ENCODE measurements at regions of chr18 and their contacts with region 1.

Region 1: DNA sequence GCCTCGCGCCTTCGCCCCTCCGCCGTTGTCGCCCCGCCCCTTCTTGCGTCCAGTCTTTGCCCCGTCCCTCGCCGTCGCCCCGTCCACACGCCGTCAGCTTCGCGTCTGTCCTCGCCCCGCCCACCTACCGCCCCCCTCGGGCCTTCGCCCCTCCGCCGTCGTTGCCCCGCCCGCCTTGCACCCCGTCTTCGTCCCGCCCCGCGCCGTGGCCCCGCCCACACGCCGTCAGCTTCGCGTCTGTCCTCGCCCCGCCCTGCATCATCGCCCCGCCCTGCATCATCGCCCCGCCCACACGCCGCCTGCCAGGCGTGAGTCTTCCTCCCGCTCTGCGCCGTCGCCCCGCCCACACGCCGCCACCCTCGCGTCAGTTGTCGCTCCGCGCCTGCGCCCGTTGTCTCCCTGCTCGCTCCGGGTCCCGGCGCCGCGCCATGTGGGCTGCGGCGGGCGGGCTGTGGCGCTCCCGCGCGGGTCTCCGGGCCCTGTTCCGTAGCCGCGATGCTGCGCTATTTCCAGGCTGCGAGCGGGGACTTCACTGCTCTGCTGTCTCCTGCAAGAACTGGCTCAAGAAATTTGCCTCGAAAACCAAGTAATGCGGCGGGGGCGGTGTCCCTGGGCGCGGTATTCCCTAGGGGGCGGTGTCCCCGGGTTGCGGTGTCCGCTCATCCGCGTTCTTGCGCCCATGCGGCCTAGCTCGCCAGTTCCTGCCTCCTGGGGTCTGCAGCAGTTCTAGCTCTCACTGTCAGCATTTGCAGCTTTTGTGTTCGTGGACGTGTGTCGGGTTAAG is at the start of gene RBFA:
- DNase-seq: peak; percentile 96 to 100 (median 99)
- ATAC-seq: peak; percentile 74 to 83 (median 80)
- H3K4me3 ChIP-seq: peak within 1 kb of the TSS; percentile 84 to 89
- H3K4me3 Mint-ChIP-seq: peak within 1 kb of the TSS; percentile 85 to 88 (median 86)
- H3K27ac ChIP-seq: peak within 1 kb of the TSS; percentile 95
- H3K27ac Mint-ChIP-seq: peak within 1 kb of the TSS; percentile 90 to 95
- H3K4me1 ChIP-seq: peaks cover 12 to 23% of the 10 kb centered on the region in 2 experiments
- H3K4me1 Mint-ChIP-seq: peaks cover 26 to 29% (median 29%) of the 10 kb centered on the region in 3 donors
- H3K27me3 ChIP-seq: no peaks in the 10 kb centered on the region
- H3K27me3 Mint-ChIP-seq: no peaks in the 10 kb centered on the region
- total RNA-seq, gene RBFA: 17.9 to 27.4 (median 20.9) TPM

Region 2: GRCh38 chr18:79819968-79820351 is 214.3 kb before region 1 on chr18:
- CTCF ChIA-PET with region 1: no interaction called
- POLR2A ChIA-PET with region 1: no interaction called
- DNase-seq: peak in 1 of 35 experiments; percentile 29
- ATAC-seq: peak in 2 of 4 experiments; percentile 23 to 35
- H3K4me3 ChIP-seq: no peak overlapping the region
- H3K4me3 Mint-ChIP-seq: peak overlapping the region in 1 of 3 donors; percentile 44
- H3K27ac ChIP-seq: no peak overlapping the region
- H3K27ac Mint-ChIP-seq: no peak overlapping the region
- H3K4me1 ChIP-seq: no peaks in the 10 kb centered on the region
- H3K4me1 Mint-ChIP-seq: peaks cover 6 to 10% (median 8%) of the 10 kb centered on the region in 3 donors
- H3K27me3 ChIP-seq: peaks cover 0 to 18% of the 10 kb centered on the region in 2 experiments
- H3K27me3 Mint-ChIP-seq: peaks cover 6 to 7% of the 10 kb centered on the region in 2 donors

Region 3: GRCh38 chr18:79964330-79965118 is 69.7 kb before region 1 on chr18 and contains the start of gene HSBP1L1:
- CTCF ChIA-PET with region 1: no interaction called
- POLR2A ChIA-PET with region 1: interaction called in 1 of 2 experiments, 13 read pairs
- DNase-seq: peak in 34 of 35 experiments; percentile 35 to 79 (median 59)
- ATAC-seq: peak; percentile 83 to 92 (median 90)
- H3K4me3 ChIP-seq: peak within 1 kb of the TSS; percentile 62 to 66
- H3K4me3 Mint-ChIP-seq: peak within 1 kb of the TSS; percentile 83 to 84 (median 83)
- H3K27ac ChIP-seq: peak within 1 kb of the TSS; percentile 62
- H3K27ac Mint-ChIP-seq: peak within 1 kb of the TSS; percentile 90 to 91
- H3K4me1 ChIP-seq: peaks cover 13 to 50% of the 10 kb centered on the region in 2 experiments
- H3K4me1 Mint-ChIP-seq: peaks cover 34 to 44% (median 40%) of the 10 kb centered on the region in 3 donors
- H3K27me3 ChIP-seq: peaks cover 0 to 12% of the 10 kb centered on the region in 2 experiments
- H3K27me3 Mint-ChIP-seq: no peaks in the 10 kb centered on the region
- total RNA-seq, gene HSBP1L1: 17.3 to 26.6 (median 20.6) TPM

Region 4: DNA sequence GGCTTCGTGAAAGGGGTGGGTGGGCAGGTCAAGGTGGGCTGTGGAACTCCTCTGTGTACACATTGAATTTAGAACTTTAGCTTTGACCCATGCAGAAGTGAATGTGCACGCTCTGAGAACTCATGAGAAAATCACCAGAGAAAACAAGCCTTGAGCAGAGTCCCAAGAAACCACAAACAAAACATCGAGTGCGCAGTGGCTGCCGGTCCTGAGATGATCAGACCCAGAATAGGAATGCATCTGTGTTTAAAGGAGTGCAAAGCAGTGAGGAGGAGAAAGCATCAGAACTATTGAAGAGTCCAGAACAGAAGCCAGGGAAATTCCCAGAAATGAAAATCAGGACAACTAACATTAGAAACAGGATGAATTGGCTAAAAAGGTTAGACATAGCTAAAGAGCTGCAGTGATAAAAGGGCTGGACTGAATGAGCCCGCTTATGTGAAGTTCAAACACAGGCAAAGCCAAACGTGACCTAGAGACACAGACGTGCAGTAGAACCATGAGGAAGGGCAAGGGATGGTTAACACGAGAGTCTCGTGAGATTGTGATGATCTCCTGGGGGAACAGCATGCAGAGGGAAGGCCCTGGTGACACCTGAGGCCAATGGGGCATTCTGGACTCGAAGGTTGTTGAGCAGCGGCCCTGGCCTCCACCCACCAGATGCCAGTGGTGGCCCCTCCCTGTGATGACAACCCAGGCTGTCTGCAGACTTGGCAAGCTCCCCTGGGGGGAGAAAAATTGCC is 29.5 kb before region 1 on chr18:
- CTCF ChIA-PET with region 1: no interaction called
- POLR2A ChIA-PET with region 1: interaction called in 1 of 2 experiments, 14 read pairs
- DNase-seq: no peak
- ATAC-seq: no peak
- H3K4me3 ChIP-seq: no peak overlapping the region
- H3K4me3 Mint-ChIP-seq: no peak overlapping the region
- H3K27ac ChIP-seq: no peak overlapping the region
- H3K27ac Mint-ChIP-seq: no peak overlapping the region
- H3K4me1 ChIP-seq: no peaks in the 10 kb centered on the region
- H3K4me1 Mint-ChIP-seq: no peaks in the 10 kb centered on the region
- H3K27me3 ChIP-seq: peaks cover 0 to 3% of the 10 kb centered on the region in 2 experiments
- H3K27me3 Mint-ChIP-seq: no peaks in the 10 kb centered on the region

Region 5: DNA sequence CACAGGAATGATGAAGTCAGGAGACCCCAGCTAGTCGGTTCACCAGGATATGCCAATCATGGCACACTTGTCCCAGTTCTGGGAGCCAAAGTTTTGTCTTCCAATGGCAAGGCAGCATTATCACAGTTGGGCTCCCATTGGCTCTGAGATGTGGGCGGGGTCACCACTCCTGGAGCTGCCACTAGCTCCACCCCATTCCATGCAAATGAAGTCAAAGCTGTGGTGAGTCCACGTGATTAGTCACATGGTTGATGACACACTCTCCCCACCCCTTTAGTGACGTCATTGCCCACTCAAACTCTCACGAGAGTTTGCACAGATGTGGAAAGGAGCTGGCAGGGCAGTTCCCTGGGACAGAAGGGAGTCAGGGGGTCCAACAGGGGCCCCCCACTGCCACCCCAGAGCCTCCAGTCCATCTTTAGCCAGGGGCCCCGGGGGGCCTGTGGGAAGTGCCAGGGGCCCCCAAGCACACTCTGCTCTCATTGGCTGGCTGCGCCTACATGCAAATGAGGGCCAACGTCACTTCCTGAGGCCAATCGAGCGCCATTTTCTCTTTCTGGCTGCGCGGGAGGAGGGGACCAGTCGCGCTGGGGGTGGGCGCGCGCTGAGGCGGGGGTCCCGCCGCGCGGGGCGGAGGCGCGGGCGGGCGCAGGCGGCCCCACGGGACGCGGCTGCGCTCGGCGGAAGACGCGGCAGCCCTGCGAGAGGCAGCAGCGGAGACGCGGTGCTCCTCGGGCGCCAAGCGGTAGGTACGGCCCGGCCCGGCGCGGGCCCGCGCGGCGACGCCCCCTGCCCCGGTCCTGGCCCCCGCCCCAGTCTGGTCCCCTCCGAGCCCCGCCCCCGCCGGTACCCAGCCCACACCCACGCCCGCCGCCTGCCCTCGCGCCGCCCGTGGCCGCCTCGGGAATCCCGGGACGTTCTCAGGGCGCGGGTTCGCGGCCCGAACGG is 74.7 kb after region 1 on chr18 and contains the start of gene ADNP2:
- CTCF ChIA-PET with region 1: no interaction called
- POLR2A ChIA-PET with region 1: interaction called, 3 to 13 read pairs
- DNase-seq: peak; percentile 56 to 94 (median 83)
- ATAC-seq: peak; percentile 73 to 84 (median 80)
- H3K4me3 ChIP-seq: peak within 1 kb of the TSS; percentile 74 to 79
- H3K4me3 Mint-ChIP-seq: peak within 1 kb of the TSS; percentile 66 to 81 (median 80)
- H3K27ac ChIP-seq: peak within 1 kb of the TSS; percentile 88
- H3K27ac Mint-ChIP-seq: peak within 1 kb of the TSS; percentile 77 to 88
- H3K4me1 ChIP-seq: peaks cover 12 to 20% of the 10 kb centered on the region in 2 experiments
- H3K4me1 Mint-ChIP-seq: peaks cover 43 to 47% (median 47%) of the 10 kb centered on the region in 3 donors
- H3K27me3 ChIP-seq: no peaks in the 10 kb centered on the region
- H3K27me3 Mint-ChIP-seq: no peaks in the 10 kb centered on the region
- total RNA-seq, gene ADNP2: 17.0 to 36.3 (median 18.1) TPM

Region 6: DNA sequence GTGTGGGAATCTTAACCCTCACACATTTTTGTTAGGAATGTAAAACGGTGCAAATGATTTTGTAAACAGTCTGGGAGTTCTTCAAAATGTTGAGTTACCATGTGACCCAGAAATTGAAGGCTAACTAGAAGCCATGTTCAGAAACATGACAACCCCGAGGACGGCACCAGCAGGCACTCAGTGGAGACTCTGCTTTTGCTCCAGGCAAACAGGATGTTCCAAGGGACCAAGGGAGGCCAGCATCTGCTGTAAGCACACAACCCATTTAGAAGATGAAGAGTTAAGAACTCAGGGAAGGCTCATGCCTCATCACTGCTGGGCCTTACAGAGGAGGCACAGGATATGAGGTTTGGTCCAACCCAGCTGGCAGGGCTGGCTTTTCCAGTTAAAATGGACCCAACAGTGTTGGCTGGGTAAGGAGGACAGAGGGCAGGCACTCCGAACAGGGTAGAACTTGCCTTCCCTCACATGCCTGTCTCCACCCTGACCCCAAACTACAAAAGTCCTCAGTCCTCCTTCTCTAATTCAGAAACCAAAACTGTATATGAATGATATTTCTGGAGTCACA is 189.4 kb after region 1 on chr18:
- CTCF ChIA-PET with region 1: no interaction called
- POLR2A ChIA-PET with region 1: no interaction called
- DNase-seq: no peak
- ATAC-seq: no peak
- H3K4me3 ChIP-seq: no peak overlapping the region
- H3K4me3 Mint-ChIP-seq: no peak overlapping the region
- H3K27ac ChIP-seq: no peak overlapping the region
- H3K27ac Mint-ChIP-seq: no peak overlapping the region
- H3K4me1 ChIP-seq: no peaks in the 10 kb centered on the region
- H3K4me1 Mint-ChIP-seq: no peaks in the 10 kb centered on the region
- H3K27me3 ChIP-seq: peaks cover 0 to 13% of the 10 kb centered on the region in 2 experiments
- H3K27me3 Mint-ChIP-seq: peaks cover 18 to 20% of the 10 kb centered on the region in 2 donors

Measured in T-cell (primary cell).